GM10248 (cell line): ENCODE measurements at regions of chr4 and their contacts with region 1.

Region 1: DNA sequence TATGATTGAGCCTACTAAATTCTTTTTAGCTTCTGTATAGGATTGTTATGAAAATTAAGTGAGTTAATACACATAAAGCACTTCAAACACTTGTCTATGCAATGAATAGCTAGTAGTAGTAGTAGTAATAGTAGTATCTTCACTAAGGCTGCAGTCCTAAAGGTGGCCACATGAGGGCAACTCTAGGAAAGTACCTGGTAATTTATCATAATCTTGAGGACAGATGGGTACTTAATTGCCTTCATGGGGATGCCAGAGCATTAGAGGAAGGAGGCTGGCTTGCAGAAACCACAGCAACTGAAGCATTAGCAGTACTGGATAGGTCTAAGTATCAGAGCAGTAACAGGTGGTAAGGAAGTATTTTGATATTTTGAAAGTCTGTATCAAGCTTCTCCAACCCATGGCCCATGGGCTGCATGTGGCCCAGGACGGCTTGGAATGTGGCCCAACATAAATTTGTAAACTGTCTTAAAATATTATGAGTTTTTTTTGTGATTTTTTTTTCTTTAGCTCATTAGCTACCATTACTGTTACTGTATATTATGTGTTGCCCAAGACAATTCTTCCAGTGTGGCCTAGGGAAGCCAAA is 17.3 kb downstream of the NIPAL1 start:
- DNase-seq: no peak
- CTCF ChIP-seq: peak; percentile 48

Region 2: GRCh38 chr4:47824840-47825239 is 209.1 kb before region 1 on chr4:
- CTCF ChIA-PET with region 1: no interaction called
- POLR2A ChIA-PET with region 1: no interaction called
- DNase-seq: peak; percentile 29
- CTCF ChIP-seq: no peak

Region 3: DNA sequence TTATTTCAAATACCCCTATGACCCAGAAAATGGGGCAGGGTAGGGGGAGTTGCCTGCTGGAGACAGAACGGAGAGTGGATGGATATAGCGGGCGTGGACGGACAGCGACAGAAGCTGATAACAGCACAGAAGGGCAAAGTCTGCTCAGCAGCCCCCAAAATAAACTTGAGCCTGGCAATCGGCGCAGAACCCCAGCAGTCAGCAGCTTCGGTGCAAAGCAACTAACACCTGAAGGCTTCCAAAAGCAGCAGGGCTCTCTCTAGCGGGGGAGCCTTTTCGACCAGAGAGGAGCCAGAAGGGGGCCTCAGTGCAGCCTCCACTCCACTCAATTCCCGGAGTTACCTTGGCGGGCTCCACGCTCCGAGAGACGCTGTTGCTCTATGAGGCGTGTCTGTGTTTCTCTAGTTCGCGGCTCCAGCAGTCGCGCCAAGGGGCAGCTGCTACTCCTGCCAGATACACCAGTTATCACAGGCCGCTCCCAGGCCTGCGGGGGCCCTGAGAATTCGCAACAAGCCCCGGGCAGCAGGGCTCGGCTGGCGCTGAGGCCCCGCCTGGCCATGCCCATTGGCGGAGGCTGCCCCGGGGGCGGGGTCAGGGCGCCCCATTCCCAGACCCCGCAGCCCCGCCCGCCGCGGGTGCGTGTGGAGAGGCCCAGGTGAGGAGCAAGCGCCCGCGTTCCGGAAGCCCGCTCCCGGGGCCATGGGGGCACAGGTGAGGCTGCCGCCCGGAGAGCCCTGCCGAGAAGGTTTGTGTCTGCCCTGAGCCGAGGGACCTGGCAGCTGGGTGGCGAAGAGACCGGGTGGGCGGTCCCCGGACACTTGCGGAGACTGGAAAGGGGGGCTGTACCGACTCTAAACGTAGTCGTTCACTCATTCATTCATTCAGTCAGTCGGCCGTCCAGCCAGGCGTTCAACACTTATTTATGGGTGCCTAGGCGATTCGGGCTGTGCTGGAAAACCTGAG is 17.5 kb before region 1 on chr4 and contains the starts of genes CNGA1 and NIPAL1:
- CTCF ChIA-PET with region 1: interaction called, 33 read pairs
- POLR2A ChIA-PET with region 1: no interaction called
- DNase-seq: peak; percentile 88
- CTCF ChIP-seq: peak; percentile 59

Region 4: GRCh38 chr4:48047421-48047844 is 13.5 kb after region 1 on chr4:
- CTCF ChIA-PET with region 1: interaction called, 172 read pairs
- POLR2A ChIA-PET with region 1: interaction called, 3 read pairs
- DNase-seq: peak; percentile 67
- CTCF ChIP-seq: no peak

Region 5: GRCh38 chr4:48065587-48066052 is 31.7 kb after region 1 on chr4:
- CTCF ChIA-PET with region 1: interaction called, 15 read pairs
- POLR2A ChIA-PET with region 1: no interaction called
- DNase-seq: peak; percentile 26
- CTCF ChIP-seq: no peak

Region 6: GRCh38 chr4:48074657-48075056 is 40.7 kb after region 1 on chr4:
- CTCF ChIA-PET with region 1: interaction called, 11 read pairs
- POLR2A ChIA-PET with region 1: no interaction called
- DNase-seq: no peak
- CTCF ChIP-seq: no peak

Region 7: GRCh38 chr4:48085821-48086607 is 52.1 kb after region 1 on chr4:
- CTCF ChIA-PET with region 1: interaction called, 37 read pairs
- POLR2A ChIA-PET with region 1: no interaction called
- DNase-seq: no peak
- CTCF ChIP-seq: no peak

Region 8: GRCh38 chr4:48162162-48162561 is 128.2 kb after region 1 on chr4:
- CTCF ChIA-PET with region 1: no interaction called
- POLR2A ChIA-PET with region 1: no interaction called
- DNase-seq: no peak
- CTCF ChIP-seq: no peak